Activated CD4-positive, alpha-beta memory T cell treated with anti-CD3 and anti-CD28 coated beads for 36 hours (primary cell): ENCODE measurements at regions of chr11 and their contacts with region 1.

Region 1: GRCh38 chr11:47176328-47177228 is at the start of gene ARFGAP2:
- DNase-seq: peak; percentile 97
- H3K4me3 Mint-ChIP-seq: peak within 1 kb of the TSS; percentile 98
- H3K27ac Mint-ChIP-seq: peak within 1 kb of the TSS; percentile 100
- H3K4me1 Mint-ChIP-seq: peaks cover 40% of the 10 kb centered on the region
- H3K27me3 Mint-ChIP-seq: no peaks in the 10 kb centered on the region
- total RNA-seq, gene ARFGAP2: 66.5 to 66.6 TPM

Region 2: DNA sequence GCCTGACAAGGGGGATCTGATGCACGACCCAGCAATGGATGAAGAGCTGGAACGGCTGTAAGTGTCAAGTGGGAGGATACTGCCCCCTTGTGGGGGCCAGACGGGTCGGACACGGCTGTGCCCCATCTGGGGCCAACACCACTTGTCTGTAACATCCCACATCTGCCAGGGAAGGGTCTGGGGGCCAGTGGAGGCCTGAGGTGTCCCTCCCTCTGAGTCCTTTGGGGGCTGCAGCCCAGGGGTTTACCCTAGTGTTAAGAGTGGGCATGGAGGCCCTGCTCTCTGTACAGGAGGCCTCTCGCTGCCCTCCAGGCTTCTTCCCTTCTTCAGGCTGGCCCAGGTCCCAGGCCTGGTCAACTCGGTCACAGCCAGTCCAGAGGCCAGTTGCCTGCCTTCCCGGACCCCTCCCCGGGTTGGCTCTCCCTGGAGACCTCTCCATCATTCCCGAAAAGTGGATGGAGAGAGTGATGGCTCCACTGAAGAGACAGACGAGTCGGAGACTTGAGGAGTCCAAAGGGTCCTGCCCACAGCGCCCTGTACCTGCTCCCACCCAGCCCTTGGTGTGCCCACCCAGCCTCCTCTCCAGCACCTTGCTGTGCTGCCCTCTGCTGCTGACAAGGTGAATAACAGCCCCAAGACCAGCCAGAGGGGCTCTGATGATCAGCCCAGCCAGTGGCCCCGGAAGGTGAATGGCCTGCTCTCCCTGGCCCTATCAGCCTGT is 15.3 kb before region 1 on chr11:
- CTCF ChIA-PET with region 1: interaction called, 19 read pairs
- POLR2A ChIA-PET with region 1: interaction called, 5 read pairs
- intact Hi-C with region 1: no loop called
- DNase-seq: peak; percentile 68
- H3K4me3 Mint-ChIP-seq: no peak overlapping the region
- H3K27ac Mint-ChIP-seq: no peak overlapping the region
- H3K4me1 Mint-ChIP-seq: no peaks in the 10 kb centered on the region
- H3K27me3 Mint-ChIP-seq: no peaks in the 10 kb centered on the region

Region 3: GRCh38 chr11:47220401-47220824 is 43.8 kb after region 1 on chr11:
- CTCF ChIA-PET with region 1: interaction called, 22 read pairs
- POLR2A ChIA-PET with region 1: interaction called, 25 read pairs
- intact Hi-C with region 1: no loop called
- DNase-seq: no peak
- H3K4me3 Mint-ChIP-seq: no peak overlapping the region
- H3K27ac Mint-ChIP-seq: peak overlapping the region; percentile 52
- H3K4me1 Mint-ChIP-seq: peaks cover 44% of the 10 kb centered on the region
- H3K27me3 Mint-ChIP-seq: no peaks in the 10 kb centered on the region

Region 4: DNA sequence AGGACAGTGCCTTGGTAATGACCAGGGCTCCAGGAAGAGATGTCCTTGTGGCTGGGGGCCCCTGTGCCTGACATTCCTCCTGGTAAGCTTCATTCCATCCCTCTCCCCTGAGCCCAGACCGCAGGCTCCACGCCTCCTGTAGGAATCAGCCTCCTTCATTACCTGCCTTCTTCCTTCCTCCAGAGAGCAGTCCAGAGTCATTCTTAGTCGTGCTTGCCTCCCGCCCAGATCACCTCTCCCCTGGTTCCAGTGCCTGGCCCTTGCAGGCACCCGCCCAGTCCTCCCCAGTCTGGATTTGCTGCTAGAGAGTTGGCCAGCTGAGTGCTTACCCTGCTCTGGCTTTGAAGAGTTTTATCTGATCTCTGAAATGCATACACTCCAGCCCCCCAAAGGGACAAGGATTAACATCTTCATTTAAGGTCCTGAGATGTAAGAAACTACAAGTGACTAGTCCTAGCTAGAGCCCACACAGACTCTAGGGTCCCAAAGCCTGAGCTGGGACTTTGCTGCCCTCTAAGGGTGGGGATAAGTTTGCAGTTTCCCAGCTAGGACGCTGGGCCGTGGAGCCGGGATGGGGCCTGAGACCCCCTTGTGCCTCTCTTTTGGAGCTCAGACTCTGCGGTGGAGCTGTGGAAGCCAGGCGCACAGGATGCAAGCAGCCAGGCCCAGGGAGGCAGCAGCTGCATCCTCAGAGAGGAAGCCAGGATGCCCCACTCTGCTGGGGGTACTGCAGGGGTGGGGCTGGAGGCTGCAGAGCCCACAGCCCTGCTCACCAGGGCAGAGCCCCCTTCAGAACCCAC is 82.8 kb after region 1 on chr11:
- CTCF ChIA-PET with region 1: interaction called, 54 read pairs
- POLR2A ChIA-PET with region 1: interaction called, 4 read pairs
- intact Hi-C with region 1: no loop called
- DNase-seq: peak; percentile 43
- H3K4me3 Mint-ChIP-seq: no peak overlapping the region
- H3K27ac Mint-ChIP-seq: no peak overlapping the region
- H3K4me1 Mint-ChIP-seq: peaks cover 2% of the 10 kb centered on the region
- H3K27me3 Mint-ChIP-seq: no peaks in the 10 kb centered on the region

Region 5: GRCh38 chr11:47355283-47356128 is 178.9 kb after region 1 on chr11:
- CTCF ChIA-PET with region 1: no interaction called
- POLR2A ChIA-PET with region 1: no interaction called
- intact Hi-C with region 1: loop called (anchors 5 kb)
- DNase-seq: peak; percentile 70
- H3K4me3 Mint-ChIP-seq: no peak overlapping the region
- H3K27ac Mint-ChIP-seq: no peak overlapping the region
- H3K4me1 Mint-ChIP-seq: peaks cover 6% of the 10 kb centered on the region
- H3K27me3 Mint-ChIP-seq: no peaks in the 10 kb centered on the region

Region 6: DNA sequence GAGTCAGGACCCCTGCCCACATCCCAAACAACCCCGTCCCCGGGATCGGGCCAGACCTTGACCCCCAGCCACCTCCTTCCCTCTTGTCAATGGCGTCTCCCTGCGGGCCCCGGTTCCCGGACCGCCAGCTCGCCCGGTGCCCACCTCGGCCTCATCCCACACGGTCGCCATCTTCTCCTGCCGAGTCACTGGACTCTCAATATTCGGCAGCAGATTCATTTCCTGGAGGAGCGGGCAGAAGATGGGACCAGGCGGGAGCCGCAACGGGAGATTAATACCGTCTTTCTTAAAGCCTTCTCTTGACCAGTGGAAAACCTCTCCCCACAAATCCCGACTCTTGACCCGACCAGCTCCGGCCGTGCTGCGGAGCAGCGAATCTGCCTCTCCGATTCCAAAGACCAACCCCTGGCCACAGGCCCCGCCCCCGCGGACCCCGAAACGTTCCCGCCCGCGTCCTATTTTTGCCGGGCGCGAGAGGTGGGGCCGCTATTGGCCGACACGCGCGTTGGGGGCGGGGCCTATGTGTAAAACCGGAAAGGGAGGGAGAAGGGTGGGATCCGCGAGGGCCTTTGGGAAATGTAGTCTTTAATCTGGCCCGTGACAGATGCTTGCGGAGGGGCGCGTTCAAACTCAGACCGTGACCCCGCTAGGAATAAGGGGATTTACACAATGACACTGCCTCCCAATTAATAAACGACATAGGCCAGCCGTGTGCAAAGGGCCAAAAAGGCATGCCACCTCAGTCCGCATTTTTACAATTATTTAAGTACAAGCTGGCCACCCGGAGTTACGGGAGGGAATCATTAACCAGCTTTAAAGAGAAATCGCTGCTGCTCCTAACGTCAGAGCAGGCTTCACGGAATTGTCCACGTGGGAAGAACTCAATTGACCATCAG is 249.7 kb after region 1 on chr11 and contains the start of gene PSMC3:
- CTCF ChIA-PET with region 1: no interaction called
- POLR2A ChIA-PET with region 1: no interaction called
- intact Hi-C with region 1: loop called (anchors 1 kb)
- DNase-seq: peak; percentile 99
- H3K4me3 Mint-ChIP-seq: peak within 1 kb of the TSS; percentile 100
- H3K27ac Mint-ChIP-seq: peak within 1 kb of the TSS; percentile 95
- H3K4me1 Mint-ChIP-seq: peaks cover 26% of the 10 kb centered on the region
- H3K27me3 Mint-ChIP-seq: no peaks in the 10 kb centered on the region
- total RNA-seq, gene PSMC3: 143 to 148 TPM